Psoas muscle (tissue), 8 donors: ENCODE measurements at regions of chr17 and their contacts with region 1.

Region 1: GRCh38 chr17:32755045-32755805 is 121.7 kb downstream of the MYO1D start:
- DNase-seq: no peak
- ATAC-seq: peak in 3 of 4 donors; percentile 47 to 73 (median 53)
- H3K4me3 ChIP-seq: no peak overlapping the region
- H3K27ac ChIP-seq: no peak overlapping the region
- H3K4me1 ChIP-seq: no peaks in the 10 kb centered on the region
- H3K27me3 ChIP-seq: no peaks in the 10 kb centered on the region
- CTCF ChIP-seq: peak; percentile 41

Region 2: GRCh38 chr17:32253117-32253611 is 502.1 kb before region 1 on chr17:
- intact Hi-C with region 1: loop called in 1 of 2 experiments (anchors 10 kb)
- DNase-seq: peak; percentile 75 to 81
- ATAC-seq: peak; percentile 86 to 97 (median 91)
- H3K4me3 ChIP-seq: no peak overlapping the region
- H3K27ac ChIP-seq: no peak overlapping the region
- H3K4me1 ChIP-seq: no peaks in the 10 kb centered on the region
- H3K27me3 ChIP-seq: no peaks in the 10 kb centered on the region
- CTCF ChIP-seq: peak; percentile 92

Region 3: GRCh38 chr17:32461853-32462617 is 293.2 kb before region 1 on chr17:
- intact Hi-C with region 1: loop called in 1 of 2 experiments (anchors 10 kb)
- DNase-seq: no peak
- ATAC-seq: peak; percentile 52 to 72 (median 68)
- H3K4me3 ChIP-seq: no peak overlapping the region
- H3K27ac ChIP-seq: no peak overlapping the region
- H3K4me1 ChIP-seq: peaks cover 9% of the 10 kb centered on the region
- H3K27me3 ChIP-seq: no peaks in the 10 kb centered on the region
- CTCF ChIP-seq: peak; percentile 56

Region 4: GRCh38 chr17:32486111-32486700 is 269.0 kb before region 1 on chr17:
- intact Hi-C with region 1: loop called in 1 of 2 experiments (anchors 10 kb)
- DNase-seq: peak; percentile 81 to 87
- ATAC-seq: peak; percentile 82 to 84 (median 82)
- H3K4me3 ChIP-seq: peak overlapping the region; percentile 66
- H3K27ac ChIP-seq: peak overlapping the region; percentile 88
- H3K4me1 ChIP-seq: peaks cover 22% of the 10 kb centered on the region
- H3K27me3 ChIP-seq: no peaks in the 10 kb centered on the region
- CTCF ChIP-seq: no peak

Region 5: DNA sequence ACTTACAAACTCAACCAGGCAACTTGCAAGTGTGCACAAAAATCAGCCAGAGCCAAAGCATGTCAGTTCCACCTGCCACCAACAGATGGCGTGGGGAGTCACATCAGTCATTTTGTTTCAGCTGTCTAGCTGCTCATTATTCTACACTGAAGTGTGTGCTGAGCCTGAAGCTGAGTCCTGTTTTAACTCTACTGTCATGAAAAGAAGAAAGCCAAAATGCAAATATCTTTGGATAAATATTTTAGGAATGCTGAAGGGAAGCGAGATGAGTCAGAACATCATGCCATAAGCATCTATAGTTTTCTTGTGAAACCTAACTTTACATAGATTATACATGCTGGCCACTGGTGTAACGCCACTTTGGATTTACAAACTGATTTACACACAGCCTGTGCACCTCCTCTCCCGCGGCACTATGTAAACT is 95.8 kb before region 1 on chr17:
- intact Hi-C with region 1: loop called in 1 of 2 experiments (anchors 2 kb)
- DNase-seq: peak; percentile 52 to 73
- ATAC-seq: peak; percentile 46 to 76 (median 65)
- H3K4me3 ChIP-seq: no peak overlapping the region
- H3K27ac ChIP-seq: no peak overlapping the region
- H3K4me1 ChIP-seq: no peaks in the 10 kb centered on the region
- H3K27me3 ChIP-seq: no peaks in the 10 kb centered on the region
- CTCF ChIP-seq: peak; percentile 88

Region 6: GRCh38 chr17:32741381-32741780 is 13.8 kb before region 1 on chr17:
- intact Hi-C with region 1: no loop called
- DNase-seq: no peak
- ATAC-seq: no peak
- H3K4me3 ChIP-seq: no peak overlapping the region
- H3K27ac ChIP-seq: no peak overlapping the region
- H3K4me1 ChIP-seq: no peaks in the 10 kb centered on the region
- H3K27me3 ChIP-seq: peaks cover 0 to 2% (median 0%) of the 10 kb centered on the region in 3 donors
- CTCF ChIP-seq: no peak